ENCODE measurements at regions of chr4 and their contacts with region 1.

Region 1: DNA sequence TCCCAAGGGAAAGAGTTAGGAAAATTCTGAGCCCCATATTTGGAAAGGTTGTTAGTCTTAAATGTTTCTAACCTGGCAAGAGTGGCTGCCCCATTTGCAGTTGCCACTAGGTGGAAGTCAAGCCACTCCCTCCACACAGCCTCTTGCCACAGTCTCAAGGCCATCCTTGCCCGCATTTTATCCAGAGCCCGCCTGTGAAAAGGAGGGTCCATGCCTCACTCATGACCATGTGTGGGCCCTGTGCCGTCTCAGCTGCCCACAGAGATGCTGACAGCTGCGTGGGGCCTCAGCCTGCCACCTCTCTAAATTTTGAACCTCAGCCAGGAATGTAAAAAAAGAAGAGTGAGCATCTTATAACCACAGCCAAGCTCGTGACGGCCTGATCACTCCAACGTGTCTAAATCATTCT is 201.5 kb upstream of the FAM241A start:
- DNase-seq: peak; percentile 22
- ATAC-seq: no peak
- H3K4me3 Mint-ChIP-seq: no peak overlapping the region
- H3K27ac Mint-ChIP-seq: no peak overlapping the region
- H3K4me1 Mint-ChIP-seq: no peaks in the 10 kb centered on the region
- H3K27me3 Mint-ChIP-seq: peaks cover 2% of the 10 kb centered on the region

Region 2: GRCh38 chr4:112031712-112032328 is 88.0 kb after region 1 on chr4:
- CTCF ChIA-PET with region 1: interaction called, 3 read pairs
- POLR2A ChIA-PET with region 1: no interaction called
- intact Hi-C with region 1: loop called in 1 of 2 experiments (anchors 2 kb)
- DNase-seq: peak; percentile 28
- ATAC-seq: no peak
- H3K4me3 Mint-ChIP-seq: no peak overlapping the region
- H3K27ac Mint-ChIP-seq: no peak overlapping the region
- H3K4me1 Mint-ChIP-seq: no peaks in the 10 kb centered on the region
- H3K27me3 Mint-ChIP-seq: peaks cover 19% of the 10 kb centered on the region

Region 3: GRCh38 chr4:112714922-112715901 is 771.4 kb after region 1 on chr4:
- CTCF ChIA-PET with region 1: no interaction called
- POLR2A ChIA-PET with region 1: no interaction called
- intact Hi-C with region 1: no loop called
- DNase-seq: no peak
- ATAC-seq: no peak
- H3K4me3 Mint-ChIP-seq: no peak overlapping the region
- H3K27ac Mint-ChIP-seq: no peak overlapping the region
- H3K4me1 Mint-ChIP-seq: no peaks in the 10 kb centered on the region
- H3K27me3 Mint-ChIP-seq: peaks cover 14% of the 10 kb centered on the region